ENCODE measurements at regions of chr5 and their contacts with region 1.

Region 1: DNA sequence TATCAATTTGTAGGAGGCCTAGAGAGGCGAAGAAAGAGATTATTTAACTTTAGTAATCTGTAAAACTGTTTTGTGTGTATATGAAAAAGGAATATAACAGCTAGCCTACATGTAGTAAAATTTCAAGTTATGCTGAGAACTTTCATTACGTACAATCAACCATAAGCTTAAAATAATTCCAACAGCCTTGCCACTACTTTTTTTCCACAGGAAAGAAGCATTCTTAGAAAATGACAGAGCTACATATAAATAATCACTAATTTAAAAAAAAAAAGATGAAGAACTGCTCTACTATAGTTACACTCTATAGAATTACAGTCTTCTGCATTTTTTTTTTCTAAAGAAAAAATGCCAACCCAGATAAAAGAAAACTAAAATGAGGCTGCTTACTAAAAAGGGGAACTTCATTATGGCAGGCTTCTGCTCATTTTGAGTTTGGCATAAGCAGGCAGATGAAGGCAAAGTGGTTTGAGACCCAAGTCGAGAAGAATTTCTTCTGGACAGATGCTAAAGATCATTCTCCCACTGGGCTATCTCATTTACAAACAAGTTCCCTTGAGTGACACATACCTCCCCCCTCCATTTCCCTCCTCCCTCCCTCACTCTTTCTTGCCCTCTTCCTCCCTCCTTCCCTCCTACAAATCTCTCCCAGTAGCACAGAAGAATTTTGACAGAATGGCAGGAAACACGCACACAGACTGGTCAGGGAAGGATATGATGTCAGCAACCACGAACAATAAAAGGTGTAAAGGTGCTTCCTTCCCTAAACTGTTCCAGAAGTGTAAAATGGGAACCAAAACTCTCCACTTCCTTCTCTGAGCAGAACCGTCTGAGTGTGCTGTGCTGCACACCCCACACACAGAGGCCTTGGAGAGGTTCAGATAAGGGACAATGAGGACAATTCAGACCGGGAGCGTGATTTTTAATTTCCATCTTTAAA is 56.1 kb downstream of the MEF2C start:
- DNase-seq: peak in 1 of 2 donors; percentile 46
- ATAC-seq: peak; percentile 43 to 45
- H3K4me3 ChIP-seq: peak overlapping the region; percentile 18 to 32 (median 25)
- H3K27ac ChIP-seq: peak overlapping the region; percentile 84 to 90 (median 87)
- H3K4me1 ChIP-seq: peaks cover 93 to 95% of the 10 kb centered on the region in 2 donors
- H3K27me3 ChIP-seq: no peaks in the 10 kb centered on the region
- CTCF ChIP-seq: no peak
- POLR2A ChIP-seq: peak; percentile 39 to 78

Region 2: DNA sequence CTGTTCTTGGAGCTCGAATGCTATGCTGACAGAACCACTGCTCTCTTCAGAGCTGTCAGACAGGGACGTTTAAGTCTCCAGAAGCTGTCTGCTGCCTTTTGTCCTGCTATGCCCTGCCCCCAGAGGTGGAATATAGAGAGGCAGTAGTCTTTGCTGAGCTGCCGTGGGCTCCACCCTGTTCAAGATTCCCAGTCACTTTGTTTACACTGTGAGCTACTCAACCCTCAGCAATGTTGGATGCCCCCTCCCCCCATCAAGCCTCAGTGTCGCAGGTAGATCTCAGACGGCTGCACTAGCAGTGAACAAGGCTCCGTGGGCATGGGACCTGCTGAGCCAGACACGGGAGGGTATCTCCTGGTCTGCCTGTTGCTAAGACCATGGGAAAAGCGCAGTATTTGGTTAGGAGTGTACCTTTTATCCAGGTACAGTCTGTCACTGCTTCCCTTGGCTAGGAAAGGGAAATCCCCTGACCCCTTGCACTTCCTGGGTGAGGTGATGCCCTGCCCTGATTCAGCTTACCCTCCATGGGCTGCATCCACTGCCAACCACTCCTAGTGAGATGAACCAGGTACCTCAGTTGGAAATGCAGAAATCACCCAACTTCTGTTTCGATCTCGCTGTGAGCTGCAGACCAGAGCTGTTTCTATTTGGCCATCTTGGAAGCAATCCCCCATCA is 902.3 kb before region 1 on chr5:
- in situ Hi-C with region 1: no loop called
- intact Hi-C with region 1: no loop called
- DNase-seq: no peak
- ATAC-seq: no peak
- H3K4me3 ChIP-seq: no peak overlapping the region
- H3K27ac ChIP-seq: no peak overlapping the region
- H3K4me1 ChIP-seq: no peaks in the 10 kb centered on the region
- H3K27me3 ChIP-seq: no peaks in the 10 kb centered on the region
- CTCF ChIP-seq: no peak
- POLR2A ChIP-seq: no peak

Region 3: GRCh38 chr5:88743231-88743879 is 83.6 kb before region 1 on chr5:
- in situ Hi-C with region 1: no loop called
- intact Hi-C with region 1: loop called (anchors 5 kb)
- DNase-seq: no peak
- ATAC-seq: no peak
- H3K4me3 ChIP-seq: peak overlapping the region in 1 of 4 donors; percentile 4
- H3K27ac ChIP-seq: peak overlapping the region; percentile 81 to 84 (median 82)
- H3K4me1 ChIP-seq: peaks cover 84 to 88% of the 10 kb centered on the region in 2 donors
- H3K27me3 ChIP-seq: no peaks in the 10 kb centered on the region
- CTCF ChIP-seq: no peak
- POLR2A ChIP-seq: no peak

Region 4: DNA sequence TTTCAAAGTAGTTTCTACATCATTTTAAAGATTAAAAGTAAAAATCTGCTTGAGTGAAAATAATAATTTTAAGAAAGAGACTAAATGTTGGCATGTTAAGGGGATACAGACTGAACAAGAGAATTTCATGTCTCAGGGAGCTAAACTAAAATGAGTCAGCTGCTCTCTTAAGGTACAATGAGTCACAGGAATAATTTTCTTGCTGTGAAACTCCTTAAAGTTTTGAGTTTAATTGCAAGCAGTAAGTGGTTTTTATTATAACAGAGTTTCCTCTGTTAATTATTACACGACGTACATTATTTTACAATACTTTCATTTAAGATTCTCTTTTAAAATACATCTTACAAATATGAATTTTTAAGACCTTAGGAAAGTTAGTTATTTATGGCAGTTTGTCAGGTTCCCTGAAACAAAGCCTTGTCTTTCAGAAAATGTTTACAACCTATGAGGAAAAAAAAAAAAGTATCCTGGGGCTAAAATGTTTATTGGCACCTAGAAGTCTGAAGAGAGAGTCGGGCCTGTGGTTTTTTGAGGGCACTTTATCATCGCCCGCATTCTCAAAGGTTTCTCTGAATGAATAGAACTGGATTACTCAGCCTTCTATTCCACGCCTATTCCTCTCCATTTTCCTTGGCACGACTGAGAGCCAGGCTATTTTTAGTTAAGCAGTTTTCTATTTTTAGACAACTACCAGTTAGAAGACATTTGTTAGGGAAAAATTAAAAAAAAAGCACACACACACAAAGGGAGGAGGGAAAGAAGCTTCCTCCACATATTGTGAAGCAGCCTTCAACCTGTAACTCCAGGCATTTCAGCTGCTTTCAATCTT is 41.3 kb before region 1 on chr5:
- in situ Hi-C with region 1: no loop called
- intact Hi-C with region 1: no loop called
- DNase-seq: peak; percentile 49
- ATAC-seq: peak; percentile 92
- H3K4me3 ChIP-seq: peak overlapping the region; percentile 14 to 29 (median 22)
- H3K27ac ChIP-seq: peak overlapping the region; percentile 88 to 92 (median 88)
- H3K4me1 ChIP-seq: peaks cover 51 to 62% of the 10 kb centered on the region in 2 donors
- H3K27me3 ChIP-seq: no peaks in the 10 kb centered on the region
- CTCF ChIP-seq: no peak
- POLR2A ChIP-seq: no peak

Region 5: GRCh38 chr5:88875341-88876234 is 48.7 kb after region 1 on chr5:
- in situ Hi-C with region 1: loop called in 2 of 4 experiments (anchors 5 to 10 kb)
- intact Hi-C with region 1: no loop called
- DNase-seq: no peak
- ATAC-seq: peak in 1 of 2 donors; percentile 62
- H3K4me3 ChIP-seq: peak overlapping the region in 2 of 4 donors; percentile 14 to 15
- H3K27ac ChIP-seq: peak overlapping the region; percentile 86 to 96 (median 94)
- H3K4me1 ChIP-seq: peaks cover 42 to 57% of the 10 kb centered on the region in 2 donors
- H3K27me3 ChIP-seq: no peaks in the 10 kb centered on the region
- CTCF ChIP-seq: no peak
- POLR2A ChIP-seq: no peak